Aorta (tissue), 5 donors: ENCODE measurements at regions of chr1 and their contacts with region 1.

Region 1: DNA sequence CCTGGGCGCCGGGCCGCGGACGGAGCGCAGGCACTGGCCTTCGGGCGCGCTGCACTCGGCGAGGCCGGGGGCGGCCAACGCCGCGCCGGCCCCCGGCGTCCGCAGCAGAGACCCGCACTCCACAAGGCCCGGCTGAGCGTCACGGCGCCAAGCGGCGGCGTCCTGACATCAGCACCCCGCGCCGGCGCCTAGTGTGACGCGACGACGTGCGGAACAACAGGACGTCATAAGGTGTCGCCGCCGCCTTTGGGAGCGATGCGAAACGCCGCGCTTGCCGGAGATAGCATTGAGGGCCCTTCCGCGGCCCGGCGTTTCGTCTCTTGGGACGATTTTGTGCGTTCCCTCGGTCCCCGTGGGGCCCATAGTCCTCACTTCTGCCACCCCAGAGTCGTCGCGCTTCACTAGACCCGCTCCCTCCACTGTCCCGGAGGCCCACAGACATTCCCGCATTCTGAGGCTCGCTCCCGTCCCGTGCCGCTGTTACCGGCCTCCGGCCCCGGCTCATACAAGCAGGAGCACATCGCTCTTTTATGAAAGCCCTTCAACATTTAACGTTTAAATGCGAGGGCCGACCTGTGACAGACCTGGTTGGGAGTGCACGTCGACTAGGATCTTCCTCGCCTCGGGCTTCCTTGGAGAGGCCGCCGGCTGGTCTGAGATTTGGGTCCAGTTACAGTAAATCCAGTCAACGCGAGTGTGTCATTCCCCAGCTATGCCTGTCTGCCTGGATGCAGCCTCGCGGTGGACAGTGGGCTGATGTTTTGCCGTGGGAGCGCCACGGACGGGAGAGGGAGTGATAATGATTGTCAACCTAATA is at the start of gene SSU72:
- DNase-seq: peak; percentile 96 to 98
- ATAC-seq: peak; percentile 96
- H3K4me3 ChIP-seq: peak within 1 kb of the TSS; percentile 74 to 99
- H3K27ac ChIP-seq: peak within 1 kb of the TSS; percentile 95
- H3K4me1 ChIP-seq: peaks cover 0 to 4% of the 10 kb centered on the region in 2 donors
- H3K27me3 ChIP-seq: no peaks in the 10 kb centered on the region
- total RNA-seq, gene SSU72: 67.7 to 71.5 TPM

Region 2: GRCh38 chr1:1399187-1399871 is 175.6 kb before region 1 on chr1 and contains the start of gene CCNL2:
- intact Hi-C with region 1: no loop called
- DNase-seq: peak; percentile 100
- ATAC-seq: peak; percentile 99
- H3K4me3 ChIP-seq: peak within 1 kb of the TSS; percentile 85 to 87
- H3K27ac ChIP-seq: peak within 1 kb of the TSS in 1 of 2 donors; percentile 57
- H3K4me1 ChIP-seq: no peaks in the 10 kb centered on the region
- H3K27me3 ChIP-seq: no peaks in the 10 kb centered on the region
- total RNA-seq, gene CCNL2: 153 to 246 TPM

Region 3: DNA sequence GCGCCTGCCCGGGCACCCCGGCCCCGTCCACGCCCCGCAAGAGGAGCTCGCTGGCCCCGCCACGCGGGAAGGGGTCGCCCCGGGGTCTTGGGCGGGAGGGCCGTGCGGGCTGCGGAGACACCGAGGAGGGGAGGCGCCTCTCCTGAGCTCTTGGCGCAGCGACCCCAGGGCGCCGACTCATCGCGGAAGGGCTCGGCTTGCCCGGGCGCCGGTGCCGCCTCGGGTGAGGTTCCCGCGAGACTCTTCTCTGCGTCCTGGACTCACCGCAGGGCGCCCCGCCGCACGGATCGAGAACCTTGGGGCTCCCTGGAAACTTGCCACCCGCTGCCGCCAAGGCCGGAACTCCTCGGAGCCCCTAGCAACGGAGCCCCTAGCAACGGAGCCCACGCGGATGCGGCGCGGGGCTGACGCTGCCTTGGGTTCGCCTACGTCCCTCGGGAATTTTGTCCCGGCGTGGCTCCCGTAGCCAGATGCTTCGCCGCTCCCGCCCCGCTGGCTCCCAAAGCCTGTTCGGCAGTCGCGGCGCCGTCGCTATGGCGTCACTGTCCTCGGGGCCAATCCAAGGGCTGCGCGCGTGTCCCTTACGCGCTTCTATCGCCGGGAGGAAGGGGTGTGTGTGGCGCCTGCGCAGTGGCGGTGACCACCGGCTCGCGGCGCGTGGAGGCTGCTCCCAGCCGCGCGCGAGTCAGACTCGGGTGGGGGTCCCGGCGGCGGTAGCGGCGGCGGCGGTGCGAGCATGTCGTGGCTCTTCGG is 63.2 kb before region 1 on chr1 and contains the start of gene ATAD3A:
- intact Hi-C with region 1: loop called in 1 of 2 experiments (anchors 2 kb)
- DNase-seq: peak; percentile 99 to 100
- ATAC-seq: peak; percentile 98
- H3K4me3 ChIP-seq: peak within 1 kb of the TSS; percentile 63 to 89
- H3K27ac ChIP-seq: peak within 1 kb of the TSS in 1 of 2 donors; percentile 77
- H3K4me1 ChIP-seq: no peaks in the 10 kb centered on the region
- H3K27me3 ChIP-seq: no peaks in the 10 kb centered on the region
- total RNA-seq, gene ATAD3A: 11.9 to 13.2 TPM

Region 4: GRCh38 chr1:1614204-1614953 is 39.5 kb after region 1 on chr1:
- intact Hi-C with region 1: loop called in 1 of 2 experiments (anchors 1 kb)
- DNase-seq: peak; percentile 67 to 80
- ATAC-seq: no peak
- H3K4me3 ChIP-seq: peak overlapping the region; percentile 23 to 46
- H3K27ac ChIP-seq: no peak overlapping the region
- H3K4me1 ChIP-seq: no peaks in the 10 kb centered on the region
- H3K27me3 ChIP-seq: no peaks in the 10 kb centered on the region

Region 5: DNA sequence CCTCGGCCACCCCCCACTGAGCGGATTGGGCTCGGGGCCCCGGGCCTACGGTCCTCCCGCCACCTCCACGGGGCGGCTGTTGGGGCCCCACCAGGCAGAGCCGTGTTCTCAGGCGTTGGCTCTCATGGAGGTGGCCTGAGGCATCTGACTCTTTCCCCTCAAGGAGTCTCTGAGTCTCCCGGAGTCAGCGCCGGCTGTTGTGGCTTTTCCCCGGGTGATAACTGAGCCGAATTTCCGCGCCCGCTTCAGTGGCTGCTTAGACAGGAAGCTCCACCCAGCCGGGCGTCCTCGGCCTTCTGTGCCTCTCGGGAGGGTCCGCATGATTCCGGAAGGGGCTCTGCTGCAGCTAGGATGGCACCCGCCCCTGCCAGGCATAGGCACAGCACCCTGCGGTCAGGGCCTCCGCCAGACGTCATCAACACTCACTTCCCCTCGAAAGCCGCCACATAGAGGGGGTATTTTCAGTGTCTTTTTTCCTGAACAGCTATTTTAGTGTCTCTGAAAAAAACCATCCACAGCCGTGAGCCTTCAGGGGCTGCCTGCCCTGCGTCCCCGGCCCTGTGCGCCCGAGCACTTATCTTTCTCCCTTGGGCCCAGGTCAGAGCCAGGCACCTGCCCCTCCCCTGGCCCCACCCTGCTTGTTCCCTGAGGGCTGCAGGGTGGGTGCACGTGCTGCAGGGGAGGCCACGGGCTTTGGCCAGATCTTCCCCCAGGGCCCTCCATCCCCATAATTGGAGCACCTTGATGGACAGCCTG is 726.1 kb after region 1 on chr1:
- intact Hi-C with region 1: no loop called
- DNase-seq: peak; percentile 93 to 97
- ATAC-seq: peak; percentile 61
- H3K4me3 ChIP-seq: no peak overlapping the region
- H3K27ac ChIP-seq: peak overlapping the region in 1 of 2 donors; percentile 3
- H3K4me1 ChIP-seq: no peaks in the 10 kb centered on the region
- H3K27me3 ChIP-seq: no peaks in the 10 kb centered on the region